ENCODE measurements at regions of chr9 and their contacts with region 1.

Region 1: DNA sequence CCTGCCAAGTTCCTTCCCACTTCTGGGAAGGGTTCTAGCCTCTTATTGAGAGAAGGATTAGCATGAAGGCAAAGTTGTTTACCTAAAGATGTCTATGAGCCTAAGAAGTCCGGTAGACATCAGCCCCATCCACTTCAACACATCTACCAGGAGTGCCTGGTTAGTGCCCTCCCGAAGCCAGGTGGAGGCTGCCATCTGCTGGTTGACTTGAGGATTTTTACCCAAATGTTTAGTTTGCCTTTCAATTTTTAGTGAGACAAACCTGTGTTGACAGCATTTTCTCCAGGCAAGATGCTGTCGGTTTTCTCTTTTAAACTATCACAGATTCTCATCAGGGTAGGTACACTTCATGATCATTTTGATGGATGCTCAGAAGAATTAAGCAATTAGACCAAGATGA is 83.6 kb upstream of the TNFSF8 start:
- DNase-seq: peak; percentile 66 to 82 (median 71)
- H3K4me3 ChIP-seq: no peak overlapping the region
- H3K27ac ChIP-seq: no peak overlapping the region
- H3K4me1 ChIP-seq: no peaks in the 10 kb centered on the region
- H3K27me3 ChIP-seq: no peaks in the 10 kb centered on the region
- CTCF ChIP-seq: peak; percentile 76 to 88 (median 84)
- POLR2A ChIP-seq: no peak

Region 2: GRCh38 chr9:114662081-114662989 is 351.7 kb before region 1 on chr9:
- intact Hi-C with region 1: loop called in 1 of 2 experiments (anchors 5 kb)
- DNase-seq: peak; percentile 23 to 65 (median 42)
- H3K4me3 ChIP-seq: no peak overlapping the region
- H3K27ac ChIP-seq: no peak overlapping the region
- H3K4me1 ChIP-seq: no peaks in the 10 kb centered on the region
- H3K27me3 ChIP-seq: no peaks in the 10 kb centered on the region
- CTCF ChIP-seq: peak; percentile 51 to 72 (median 67)
- POLR2A ChIP-seq: no peak

Region 3: DNA sequence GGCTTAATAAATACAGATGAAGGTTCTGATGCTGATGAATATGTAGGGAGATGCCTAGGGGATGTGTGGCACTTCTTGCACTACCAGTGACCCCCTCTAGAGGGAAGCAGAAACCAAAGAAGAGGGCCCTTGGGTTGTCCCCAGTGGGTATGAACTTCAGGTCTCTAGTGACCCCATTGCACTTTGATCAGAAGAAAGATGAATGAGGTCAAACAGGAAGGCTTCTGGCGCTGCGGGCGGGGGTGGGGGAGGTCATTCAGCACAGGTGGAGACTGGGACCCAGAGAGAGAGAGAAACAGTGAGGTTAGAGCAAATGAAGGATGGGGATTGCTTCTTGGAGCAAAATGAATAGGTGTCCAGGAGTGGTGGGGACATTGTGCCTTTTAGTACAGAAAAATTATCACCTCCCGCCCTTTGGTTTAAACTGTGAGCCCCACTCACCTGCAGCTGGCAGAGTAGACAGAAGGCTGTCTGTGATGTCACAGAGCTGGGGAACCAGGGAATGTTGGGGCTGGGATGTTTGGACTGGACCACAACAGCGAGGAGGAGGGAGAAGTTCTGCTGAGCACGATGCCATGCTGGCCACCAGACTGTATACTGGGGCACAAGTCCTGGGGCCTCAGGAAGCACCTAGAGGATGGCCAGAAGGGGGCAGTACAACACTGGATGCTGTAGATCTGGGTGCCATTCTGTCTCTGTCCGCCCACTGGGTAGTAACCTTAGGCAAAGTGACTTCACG is 332.2 kb before region 1 on chr9 and contains the start of gene TEX48:
- intact Hi-C with region 1: loop called (anchors 5 kb)
- DNase-seq: peak; percentile 54 to 81 (median 68)
- H3K4me3 ChIP-seq: no peak within 1 kb of the TSS
- H3K27ac ChIP-seq: no peak within 1 kb of the TSS
- H3K4me1 ChIP-seq: no peaks in the 10 kb centered on the region
- H3K27me3 ChIP-seq: no peaks in the 10 kb centered on the region
- CTCF ChIP-seq: peak; percentile 41 to 70 (median 46)
- POLR2A ChIP-seq: no peak
- total RNA-seq, gene TEX48: not detected

Region 4: DNA sequence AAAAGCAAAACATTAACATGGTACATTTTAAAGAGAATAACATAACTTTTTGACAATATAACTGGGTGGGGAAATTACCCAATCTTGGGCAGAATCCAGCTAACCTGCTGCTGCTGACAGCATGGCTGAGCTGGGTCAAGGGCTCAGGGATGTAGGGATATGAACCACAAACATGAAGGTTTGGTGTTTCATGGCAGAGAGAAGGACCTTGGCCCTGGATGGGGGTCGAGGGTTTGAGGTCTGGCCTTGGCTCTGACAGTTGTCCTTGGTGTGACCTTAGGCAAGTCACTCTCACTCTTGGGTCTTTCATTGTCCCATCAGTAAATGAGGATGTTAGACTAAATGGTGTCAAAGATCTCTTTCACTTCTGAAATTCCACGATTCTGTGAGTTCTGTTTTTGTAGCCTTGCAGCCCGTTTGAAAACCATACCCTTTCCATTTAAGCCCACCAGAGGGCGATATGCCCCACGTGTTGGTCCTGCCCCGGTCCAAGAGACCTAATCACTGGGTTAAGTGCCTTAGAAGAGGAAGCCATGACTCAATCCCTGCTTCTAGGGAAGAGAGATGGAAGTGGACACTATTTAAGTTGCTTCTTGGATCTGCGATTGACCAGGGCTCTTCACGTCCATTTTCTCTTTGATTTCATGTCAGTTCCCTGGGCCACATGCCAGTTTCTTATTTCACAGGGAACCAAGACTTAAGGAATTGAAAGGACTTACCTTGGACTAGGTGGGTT is 275.2 kb before region 1 on chr9:
- intact Hi-C with region 1: loop called in 1 of 2 experiments (anchors 5 kb)
- DNase-seq: peak; percentile 66 to 91 (median 75)
- H3K4me3 ChIP-seq: no peak overlapping the region
- H3K27ac ChIP-seq: no peak overlapping the region
- H3K4me1 ChIP-seq: no peaks in the 10 kb centered on the region
- H3K27me3 ChIP-seq: no peaks in the 10 kb centered on the region
- CTCF ChIP-seq: peak; percentile 82 to 92 (median 88)
- POLR2A ChIP-seq: no peak

Region 5: GRCh38 chr9:115276621-115277020 is 262.6 kb after region 1 on chr9:
- intact Hi-C with region 1: no loop called
- DNase-seq: no peak
- H3K4me3 ChIP-seq: no peak overlapping the region
- H3K27ac ChIP-seq: no peak overlapping the region
- H3K4me1 ChIP-seq: no peaks in the 10 kb centered on the region
- H3K27me3 ChIP-seq: no peaks in the 10 kb centered on the region
- CTCF ChIP-seq: no peak
- POLR2A ChIP-seq: no peak

Measured in adrenal gland (tissue), 19 donors.